SK-N-SH (cell line): ENCODE measurements at regions of chr7 and their contacts with region 1.

Region 1: DNA sequence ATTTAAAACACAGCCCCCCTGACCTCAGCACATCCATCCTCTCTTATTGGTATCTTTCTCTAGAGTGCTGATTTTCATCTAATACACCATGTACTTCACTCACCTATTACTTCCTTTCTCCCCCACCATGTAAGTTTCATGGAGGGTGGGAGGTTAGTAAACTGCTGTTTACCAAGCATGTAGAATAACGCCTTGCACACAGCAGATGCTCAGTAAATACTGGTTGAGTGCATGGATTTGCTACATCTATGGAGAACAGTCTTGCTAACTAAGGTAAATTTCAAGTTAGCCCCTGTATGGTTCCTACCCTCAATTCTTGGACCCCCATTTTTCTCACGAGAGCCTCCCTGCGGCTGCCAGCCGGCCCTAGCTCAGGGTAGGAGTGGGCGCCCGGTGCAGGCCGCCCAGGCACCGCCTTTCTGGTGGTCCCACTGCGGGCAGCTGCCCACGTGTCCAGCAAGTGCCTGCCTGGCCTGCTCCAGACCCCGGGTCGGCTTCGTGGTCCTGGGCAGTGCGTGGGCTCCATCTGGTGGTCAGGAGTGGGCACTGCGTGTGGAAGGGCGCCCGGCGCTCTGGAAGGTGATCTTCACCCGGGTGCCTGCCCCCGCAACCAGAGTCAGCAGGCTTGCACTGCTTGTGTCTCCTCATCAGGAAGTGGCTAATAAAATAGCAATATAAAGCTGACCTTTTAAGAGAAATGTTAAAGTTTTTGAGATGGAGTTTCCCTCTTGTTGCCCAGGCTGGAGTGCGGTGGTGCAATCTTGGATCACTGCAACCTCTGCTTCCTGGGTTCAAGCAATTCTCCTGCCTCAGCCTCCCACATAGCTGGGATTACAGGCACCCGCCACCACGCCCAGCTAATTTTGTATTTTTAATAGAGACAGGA is 63.4 kb upstream of the DNAJB6 start:
- DNase-seq: peak; percentile 99
- H3K4me3 ChIP-seq: no peak overlapping the region; a peak in 1 of 4 replicates
- H3K27ac ChIP-seq: no peak overlapping the region
- H3K4me1 ChIP-seq: peaks cover 24 to 27% of the 10 kb centered on the region in 2 experiments; a peak in 3 of 4 replicates
- H3K27me3 ChIP-seq: no peaks in the 10 kb centered on the region
- CTCF ChIP-seq: peak; percentile 99
- EP300 ChIP-seq: no peak
- RAD21 ChIP-seq: peak; percentile 97

Region 2: GRCh38 chr7:156949541-156950380 is 323.7 kb before region 1 on chr7 and contains the start of gene NOM1:
- CTCF ChIA-PET with region 1: interaction called, 36 read pairs
- POLR2A ChIA-PET with region 1: interaction called, 3 read pairs
- DNase-seq: peak; percentile 99
- H3K4me3 ChIP-seq: peak within 1 kb of the TSS; percentile 85 to 94
- H3K27ac ChIP-seq: peak within 1 kb of the TSS; percentile 63 to 71
- H3K4me1 ChIP-seq: peaks cover 5 to 21% of the 10 kb centered on the region in 2 experiments; a peak in 3 of 4 replicates
- H3K27me3 ChIP-seq: no peaks in the 10 kb centered on the region
- CTCF ChIP-seq: peak; percentile 63
- EP300 ChIP-seq: no peak
- RAD21 ChIP-seq: peak; percentile 48
- polyA plus RNA-seq, gene NOM1: 18.1 and 21.2 TPM in 2 replicates

Region 3: DNA sequence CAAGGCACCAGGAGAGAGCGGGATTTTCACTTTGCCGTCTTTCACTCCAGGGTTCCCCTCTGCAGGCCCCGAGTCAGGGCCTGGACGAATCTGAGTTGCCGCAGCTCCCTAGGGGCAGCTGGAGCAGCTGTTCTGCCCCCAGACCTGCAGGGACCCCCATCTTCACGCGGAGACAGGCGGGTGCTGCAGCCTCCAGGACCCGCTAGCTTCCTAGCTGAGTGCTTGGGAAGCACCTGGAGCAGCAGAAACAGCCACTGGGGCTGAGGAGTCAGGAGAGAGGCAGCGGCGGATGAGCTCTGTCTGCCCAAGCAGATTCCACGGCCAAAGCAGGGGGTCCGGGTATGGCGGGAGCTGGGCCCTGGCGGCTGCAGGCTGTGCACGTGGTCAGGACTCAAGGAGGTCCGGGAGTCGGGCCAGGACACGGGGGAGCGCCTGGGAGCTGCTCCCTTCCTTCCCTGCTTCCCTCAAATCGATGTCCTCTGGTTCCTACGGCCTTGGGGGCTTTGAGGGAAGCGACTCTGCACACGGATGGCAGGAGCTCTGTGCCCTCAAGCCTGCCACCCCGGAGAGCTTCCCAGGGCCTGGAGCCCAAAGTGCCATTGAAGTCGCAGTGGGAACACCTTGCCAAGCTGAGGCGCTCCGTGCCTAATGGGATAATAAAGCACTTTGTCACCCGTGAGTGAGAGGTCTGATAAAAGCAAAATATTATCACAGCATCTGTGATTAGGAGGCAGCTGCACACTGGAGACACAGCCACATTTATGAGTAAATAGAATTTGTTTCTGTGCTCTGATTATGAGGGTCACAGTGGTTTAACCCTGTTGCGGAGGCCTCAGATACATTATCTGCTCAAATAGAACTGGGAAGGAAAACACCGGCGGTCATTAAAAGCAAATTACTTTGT is 280.2 kb before region 1 on chr7:
- CTCF ChIA-PET with region 1: interaction called, 15 read pairs
- POLR2A ChIA-PET with region 1: no interaction called
- DNase-seq: peak; percentile 61
- H3K4me3 ChIP-seq: no peak overlapping the region
- H3K27ac ChIP-seq: no peak overlapping the region
- H3K4me1 ChIP-seq: peaks cover 0 to 10% of the 10 kb centered on the region in 2 experiments; a peak in 1 of 4 replicates
- H3K27me3 ChIP-seq: peaks cover 30% of the 10 kb centered on the region
- CTCF ChIP-seq: no peak
- EP300 ChIP-seq: no peak
- RAD21 ChIP-seq: no peak

Region 4: GRCh38 chr7:157228864-157229422 is 44.5 kb before region 1 on chr7:
- CTCF ChIA-PET with region 1: interaction called, 29 read pairs
- POLR2A ChIA-PET with region 1: no interaction called
- DNase-seq: peak; percentile 53
- H3K4me3 ChIP-seq: no peak overlapping the region
- H3K27ac ChIP-seq: no peak overlapping the region
- H3K4me1 ChIP-seq: peaks cover 0 to 6% of the 10 kb centered on the region in 2 experiments; a peak in 2 of 4 replicates
- H3K27me3 ChIP-seq: no peaks in the 10 kb centered on the region
- CTCF ChIP-seq: peak; percentile 57
- EP300 ChIP-seq: no peak
- RAD21 ChIP-seq: peak; percentile 66

Region 5: GRCh38 chr7:157323419-157323818 is 50.0 kb after region 1 on chr7:
- CTCF ChIA-PET with region 1: interaction called, 39 read pairs
- POLR2A ChIA-PET with region 1: no interaction called
- DNase-seq: no peak
- H3K4me3 ChIP-seq: no peak overlapping the region
- H3K27ac ChIP-seq: no peak overlapping the region
- H3K4me1 ChIP-seq: no peaks in the 10 kb centered on the region
- H3K27me3 ChIP-seq: no peaks in the 10 kb centered on the region
- CTCF ChIP-seq: no peak
- EP300 ChIP-seq: no peak
- RAD21 ChIP-seq: no peak

Region 6: GRCh38 chr7:158077934-158078910 is 804.8 kb after region 1 on chr7:
- CTCF ChIA-PET with region 1: no interaction called
- POLR2A ChIA-PET with region 1: no interaction called
- DNase-seq: peak; percentile 17
- H3K4me3 ChIP-seq: no peak overlapping the region
- H3K27ac ChIP-seq: no peak overlapping the region
- H3K4me1 ChIP-seq: no peaks in the 10 kb centered on the region; a peak in 1 of 4 replicates
- H3K27me3 ChIP-seq: no peaks in the 10 kb centered on the region
- CTCF ChIP-seq: no peak
- EP300 ChIP-seq: no peak
- RAD21 ChIP-seq: no peak